Activated CD8-positive, alpha-beta T cell treated with anti-CD3 and anti-CD28 coated beads for 36 hours (primary cell): ENCODE measurements at regions of chr1 and their contacts with region 1.

Region 1: DNA sequence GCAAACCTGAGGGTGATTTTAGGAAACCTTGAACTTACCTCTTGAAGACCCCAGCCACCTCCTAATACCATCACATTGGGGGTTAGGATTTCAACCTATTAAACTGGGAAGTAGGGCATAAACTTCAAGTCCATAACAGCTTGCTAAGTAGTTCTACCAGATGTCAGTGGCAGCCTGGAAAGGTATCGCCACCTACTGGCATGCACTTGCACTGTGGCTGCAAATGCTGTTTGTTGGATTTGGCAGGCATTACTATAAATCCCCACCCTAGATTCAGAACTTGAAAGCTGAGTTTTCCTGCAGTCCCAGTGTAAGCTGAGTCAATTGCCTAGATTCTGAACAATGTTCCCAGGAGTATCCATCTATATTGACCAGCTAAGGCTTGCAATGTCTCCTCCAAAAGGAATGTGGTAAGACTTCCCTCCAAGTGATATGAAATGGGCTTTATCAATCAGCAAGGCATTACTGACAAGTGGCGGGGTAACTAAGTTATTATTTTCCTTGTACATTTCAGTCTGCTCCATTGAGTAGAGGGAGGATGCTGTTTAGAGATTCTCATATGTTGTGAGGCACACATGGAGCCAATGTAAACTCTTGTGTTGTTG is 474.5 kb downstream of the PTPRC start:
- DNase-seq: peak; percentile 81
- ATAC-seq: peak; percentile 69
- H3K4me3 Mint-ChIP-seq: no peak overlapping the region
- H3K27ac Mint-ChIP-seq: no peak overlapping the region
- H3K4me1 Mint-ChIP-seq: peaks cover 4% of the 10 kb centered on the region
- H3K27me3 Mint-ChIP-seq: peaks cover 1% of the 10 kb centered on the region
- CTCF ChIP-seq: peak; percentile 80

Region 2: DNA sequence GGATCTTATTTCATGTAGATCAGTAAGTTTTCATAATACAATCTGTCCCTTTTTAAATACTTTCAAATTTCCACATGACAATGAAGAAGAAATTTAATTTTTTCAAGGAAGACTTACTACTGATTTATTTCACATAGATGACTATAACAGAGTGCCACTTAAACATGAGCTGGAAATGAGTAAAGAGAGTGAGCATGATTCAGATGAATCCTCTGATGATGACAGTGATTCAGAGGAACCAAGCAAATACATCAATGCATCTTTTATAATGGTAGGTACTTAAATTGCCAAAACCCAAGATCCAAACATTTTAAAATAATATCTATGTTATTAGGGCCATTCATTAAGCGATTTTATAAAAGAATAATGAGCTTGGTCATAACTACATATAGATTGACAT is 364.1 kb before region 1 on chr1:
- CTCF ChIA-PET with region 1: interaction called, 11 read pairs
- POLR2A ChIA-PET with region 1: no interaction called
- intact Hi-C with region 1: no loop called
- DNase-seq: no peak
- ATAC-seq: no peak
- H3K4me3 Mint-ChIP-seq: no peak overlapping the region
- H3K27ac Mint-ChIP-seq: peak overlapping the region; percentile 73
- H3K4me1 Mint-ChIP-seq: peaks cover 10% of the 10 kb centered on the region
- H3K27me3 Mint-ChIP-seq: no peaks in the 10 kb centered on the region
- CTCF ChIP-seq: no peak

Region 3: GRCh38 chr1:198788561-198789064 is 324.8 kb before region 1 on chr1:
- CTCF ChIA-PET with region 1: interaction called, 11 read pairs
- POLR2A ChIA-PET with region 1: no interaction called
- intact Hi-C with region 1: no loop called
- DNase-seq: peak; percentile 56
- ATAC-seq: peak; percentile 98
- H3K4me3 Mint-ChIP-seq: no peak overlapping the region
- H3K27ac Mint-ChIP-seq: no peak overlapping the region
- H3K4me1 Mint-ChIP-seq: peaks cover 13% of the 10 kb centered on the region
- H3K27me3 Mint-ChIP-seq: no peaks in the 10 kb centered on the region
- CTCF ChIP-seq: no peak

Region 4: DNA sequence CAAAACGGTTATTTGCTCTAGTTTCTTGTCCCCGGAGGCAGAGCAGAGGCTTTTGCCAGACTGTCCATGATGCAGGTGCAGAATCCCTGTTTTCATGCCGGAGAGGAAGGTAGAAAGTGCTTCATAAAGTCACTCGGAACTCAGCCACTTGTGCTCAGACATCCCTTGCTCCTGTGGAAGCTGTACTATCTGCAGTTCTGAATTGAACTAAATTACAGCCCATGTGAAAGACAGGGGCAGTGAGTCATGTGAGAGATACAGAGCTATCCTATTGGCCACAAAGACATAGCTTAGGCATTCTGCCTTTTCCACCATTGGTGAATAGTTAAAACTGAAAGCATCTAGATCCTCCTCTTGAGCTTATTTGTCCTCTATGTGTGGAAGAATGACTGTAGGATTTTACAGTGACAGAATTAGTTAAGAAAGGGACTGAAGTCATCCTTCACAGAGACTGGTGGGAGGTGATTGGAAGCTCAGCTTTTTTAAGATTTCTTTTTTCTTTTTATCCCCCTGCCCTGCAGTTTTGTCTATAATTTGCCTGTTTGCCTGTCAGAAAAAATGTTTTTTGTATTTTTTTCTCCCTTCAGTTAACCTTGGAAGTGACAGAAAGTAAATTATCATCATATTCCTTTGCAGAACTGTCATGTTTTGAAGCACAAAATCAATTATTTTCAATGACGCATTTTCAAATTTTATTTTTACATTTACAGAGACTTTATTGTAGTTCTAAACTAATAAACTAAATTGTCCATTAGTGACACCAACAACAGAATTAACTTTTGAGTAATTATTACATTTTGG is 175.9 kb before region 1 on chr1:
- CTCF ChIA-PET with region 1: interaction called, 17 read pairs
- POLR2A ChIA-PET with region 1: interaction called, 4 read pairs
- intact Hi-C with region 1: no loop called
- DNase-seq: peak; percentile 65
- ATAC-seq: peak; percentile 92
- H3K4me3 Mint-ChIP-seq: no peak overlapping the region
- H3K27ac Mint-ChIP-seq: peak overlapping the region; percentile 93
- H3K4me1 Mint-ChIP-seq: peaks cover 15% of the 10 kb centered on the region
- H3K27me3 Mint-ChIP-seq: no peaks in the 10 kb centered on the region
- CTCF ChIP-seq: no peak

Region 5: DNA sequence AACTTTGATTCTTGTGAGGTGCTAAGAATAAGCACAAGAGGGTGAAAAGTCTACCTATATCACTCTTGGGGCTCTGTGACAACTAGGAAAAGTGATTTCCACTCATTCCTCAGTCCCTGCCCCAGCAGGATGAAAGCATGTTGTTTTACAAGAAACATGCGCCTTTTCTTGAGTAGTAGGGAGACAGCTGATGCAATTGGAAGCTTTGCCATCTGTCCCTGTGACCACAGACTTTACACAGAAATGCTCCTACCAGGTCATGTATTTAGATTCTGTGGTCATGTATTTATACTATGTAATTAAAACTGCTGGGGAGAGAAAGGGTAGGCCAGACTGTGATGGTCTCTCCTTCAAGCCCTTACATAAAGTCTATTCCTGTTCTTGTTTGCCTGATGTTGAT is 29.1 kb before region 1 on chr1:
- CTCF ChIA-PET with region 1: interaction called, 10 read pairs
- POLR2A ChIA-PET with region 1: no interaction called
- intact Hi-C with region 1: no loop called
- DNase-seq: no peak
- ATAC-seq: no peak
- H3K4me3 Mint-ChIP-seq: no peak overlapping the region
- H3K27ac Mint-ChIP-seq: no peak overlapping the region
- H3K4me1 Mint-ChIP-seq: peaks cover 15% of the 10 kb centered on the region
- H3K27me3 Mint-ChIP-seq: no peaks in the 10 kb centered on the region
- CTCF ChIP-seq: no peak

Region 6: DNA sequence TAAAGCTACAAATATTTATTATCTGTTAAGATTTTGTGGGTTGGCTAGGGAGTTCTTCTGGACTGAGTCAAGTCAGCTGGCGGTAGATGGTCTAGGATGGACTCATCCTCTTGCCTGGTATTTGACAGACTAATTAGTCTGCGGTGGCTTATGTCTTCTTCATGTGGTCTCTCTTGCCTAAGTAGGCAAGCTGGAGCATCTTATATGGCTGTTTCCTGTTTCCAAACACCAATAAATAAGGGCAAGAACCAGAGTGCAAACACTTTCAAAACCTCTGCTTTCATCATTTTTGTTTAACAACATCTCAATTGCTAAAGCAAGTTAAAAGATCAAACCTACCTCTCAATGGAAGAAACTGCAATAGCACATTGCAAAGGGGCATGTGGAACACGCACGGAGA is 10.2 kb after region 1 on chr1:
- CTCF ChIA-PET with region 1: interaction called, 39 read pairs
- POLR2A ChIA-PET with region 1: no interaction called
- intact Hi-C with region 1: no loop called
- DNase-seq: no peak
- ATAC-seq: peak; percentile 53
- H3K4me3 Mint-ChIP-seq: no peak overlapping the region
- H3K27ac Mint-ChIP-seq: no peak overlapping the region
- H3K4me1 Mint-ChIP-seq: peaks cover 15% of the 10 kb centered on the region
- H3K27me3 Mint-ChIP-seq: no peaks in the 10 kb centered on the region
- CTCF ChIP-seq: no peak